ENCODE measurements at regions of chr18 and their contacts with region 1.

Region 1: GRCh38 chr18:37385846-37386778 is 179.5 kb downstream of the CELF4 start:
- DNase-seq: no peak
- ATAC-seq: peak in 1 of 4 donors; percentile 50
- H3K4me3 ChIP-seq: no peak overlapping the region
- H3K27ac ChIP-seq: no peak overlapping the region
- H3K4me1 ChIP-seq: no peaks in the 10 kb centered on the region
- H3K27me3 ChIP-seq: no peaks in the 10 kb centered on the region
- CTCF ChIP-seq: peak; percentile 38 to 66 (median 60)

Region 2: GRCh38 chr18:37529863-37530262 is 143.8 kb after region 1 on chr18:
- intact Hi-C with region 1: loop called in 1 of 3 experiments (anchors 5 kb)
- DNase-seq: no peak
- ATAC-seq: no peak
- H3K4me3 ChIP-seq: no peak overlapping the region
- H3K27ac ChIP-seq: no peak overlapping the region
- H3K4me1 ChIP-seq: no peaks in the 10 kb centered on the region
- H3K27me3 ChIP-seq: peaks cover 0 to 5% (median 1%) of the 10 kb centered on the region in 4 donors
- CTCF ChIP-seq: no peak